Activated CD4-positive, alpha-beta T cell treated with anti-CD3 and anti-CD28 coated beads, Interleukin-2, amount 10 ng/mL, durations not matched to agents 24 days and 14 days (primary cell): ENCODE measurements at regions of chr17 and their contacts with region 1.

Region 1: DNA sequence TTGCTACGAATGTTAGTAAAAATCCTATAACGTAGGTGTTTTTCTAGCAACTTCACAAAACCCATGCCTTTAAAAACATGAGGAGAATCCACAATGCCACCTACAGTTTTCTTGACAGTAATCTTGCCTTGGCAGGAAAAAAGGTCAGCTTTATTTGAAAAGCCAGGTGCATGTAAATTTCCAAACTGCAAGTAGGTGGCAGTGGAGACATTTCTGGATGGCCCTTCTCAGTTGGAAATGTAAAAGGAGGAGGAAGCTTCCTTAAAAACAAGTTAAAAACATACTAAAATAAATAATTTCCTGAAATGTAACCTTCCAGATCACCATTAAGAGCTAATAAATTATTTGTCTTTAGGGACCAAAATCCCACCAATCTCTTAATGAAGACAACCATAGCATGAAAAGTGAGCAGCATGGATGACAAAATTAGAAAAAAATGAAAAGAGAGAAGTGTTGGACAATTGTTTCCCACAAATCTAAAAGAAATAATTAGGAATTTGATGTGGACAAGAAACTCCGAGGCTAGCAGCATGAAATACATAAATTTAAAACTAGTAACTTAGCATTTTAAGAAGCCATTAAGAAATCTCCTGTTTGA is 152.2 kb downstream of the SNX11 start:
- DNase-seq: no peak
- H3K4me3 Mint-ChIP-seq: no peak overlapping the region
- H3K27ac Mint-ChIP-seq: no peak overlapping the region
- H3K4me1 Mint-ChIP-seq: peaks cover 5% of the 10 kb centered on the region
- H3K27me3 Mint-ChIP-seq: no peaks in the 10 kb centered on the region

Region 2: DNA sequence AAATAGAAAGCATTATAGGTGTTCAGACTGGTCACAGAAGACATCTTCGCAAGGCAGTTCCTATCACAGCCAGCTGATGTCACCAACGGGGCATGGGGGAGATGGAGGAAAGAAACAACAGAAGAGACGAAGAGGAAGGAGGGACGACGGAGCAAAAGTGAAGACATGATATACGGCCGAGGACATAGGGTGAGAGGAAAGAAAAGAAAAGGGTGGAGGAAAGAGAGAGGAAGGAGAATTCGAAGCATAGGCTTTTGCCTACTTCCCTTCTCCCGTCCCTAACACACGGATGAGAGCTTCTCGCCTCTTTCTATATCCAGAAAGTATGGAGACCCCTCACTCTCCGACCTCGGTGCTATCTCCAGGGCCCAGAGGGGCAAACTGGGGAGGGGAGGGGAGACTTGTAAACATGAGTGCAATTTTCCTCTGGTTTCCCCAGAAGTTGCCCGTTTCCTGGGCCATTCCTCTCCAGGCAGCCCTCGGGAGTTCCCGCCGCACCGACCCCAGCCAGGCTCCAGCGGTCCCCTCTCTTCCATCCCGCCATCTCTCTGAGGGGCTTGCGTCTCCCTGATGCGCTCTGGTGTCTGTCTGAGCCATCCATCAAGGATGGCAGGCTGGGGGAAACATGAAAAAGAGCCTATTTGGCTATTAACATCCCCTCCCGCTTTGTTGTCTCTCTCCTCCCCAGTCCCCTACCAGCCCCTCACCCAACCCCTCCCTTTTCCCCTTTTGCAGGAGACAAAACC is 248.2 kb before region 1 on chr17:
- intact Hi-C with region 1: no loop called
- DNase-seq: peak; percentile 88
- H3K4me3 Mint-ChIP-seq: peak overlapping the region; percentile 81
- H3K27ac Mint-ChIP-seq: peak overlapping the region; percentile 22
- H3K4me1 Mint-ChIP-seq: peaks cover 19% of the 10 kb centered on the region
- H3K27me3 Mint-ChIP-seq: peaks cover 29% of the 10 kb centered on the region

Region 3: GRCh38 chr17:48295362-48296288 is 35.8 kb after region 1 on chr17:
- intact Hi-C with region 1: loop called (anchors 5 kb)
- DNase-seq: peak; percentile 68
- H3K4me3 Mint-ChIP-seq: peak overlapping the region; percentile 76
- H3K27ac Mint-ChIP-seq: peak overlapping the region; percentile 90
- H3K4me1 Mint-ChIP-seq: peaks cover 50% of the 10 kb centered on the region
- H3K27me3 Mint-ChIP-seq: no peaks in the 10 kb centered on the region